Motor neuron (in vitro differentiated cells): ENCODE measurements at regions of chr17 and their contacts with region 1.

Region 1: GRCh38 chr17:82351716-82352488 is 7.1 kb upstream of the TEX19 start:
- ATAC-seq: peak; percentile 75 to 97 (median 84)
- H3K4me3 ChIP-seq: no peak overlapping the region
- H3K27ac ChIP-seq: no peak overlapping the region
- H3K4me1 ChIP-seq: peaks cover 12 to 13% of the 10 kb centered on the region in 2 donors

Region 2: GRCh38 chr17:82400830-82401229 is 48.9 kb after region 1 on chr17:
- in situ Hi-C with region 1: loop called in 1 of 9 experiments (anchors 10 kb)
- ATAC-seq: peak in 1 of 8 experiments; percentile 50
- H3K4me3 ChIP-seq: no peak overlapping the region
- H3K27ac ChIP-seq: no peak overlapping the region
- H3K4me1 ChIP-seq: peaks cover 7 to 8% of the 10 kb centered on the region in 2 donors

Region 3: DNA sequence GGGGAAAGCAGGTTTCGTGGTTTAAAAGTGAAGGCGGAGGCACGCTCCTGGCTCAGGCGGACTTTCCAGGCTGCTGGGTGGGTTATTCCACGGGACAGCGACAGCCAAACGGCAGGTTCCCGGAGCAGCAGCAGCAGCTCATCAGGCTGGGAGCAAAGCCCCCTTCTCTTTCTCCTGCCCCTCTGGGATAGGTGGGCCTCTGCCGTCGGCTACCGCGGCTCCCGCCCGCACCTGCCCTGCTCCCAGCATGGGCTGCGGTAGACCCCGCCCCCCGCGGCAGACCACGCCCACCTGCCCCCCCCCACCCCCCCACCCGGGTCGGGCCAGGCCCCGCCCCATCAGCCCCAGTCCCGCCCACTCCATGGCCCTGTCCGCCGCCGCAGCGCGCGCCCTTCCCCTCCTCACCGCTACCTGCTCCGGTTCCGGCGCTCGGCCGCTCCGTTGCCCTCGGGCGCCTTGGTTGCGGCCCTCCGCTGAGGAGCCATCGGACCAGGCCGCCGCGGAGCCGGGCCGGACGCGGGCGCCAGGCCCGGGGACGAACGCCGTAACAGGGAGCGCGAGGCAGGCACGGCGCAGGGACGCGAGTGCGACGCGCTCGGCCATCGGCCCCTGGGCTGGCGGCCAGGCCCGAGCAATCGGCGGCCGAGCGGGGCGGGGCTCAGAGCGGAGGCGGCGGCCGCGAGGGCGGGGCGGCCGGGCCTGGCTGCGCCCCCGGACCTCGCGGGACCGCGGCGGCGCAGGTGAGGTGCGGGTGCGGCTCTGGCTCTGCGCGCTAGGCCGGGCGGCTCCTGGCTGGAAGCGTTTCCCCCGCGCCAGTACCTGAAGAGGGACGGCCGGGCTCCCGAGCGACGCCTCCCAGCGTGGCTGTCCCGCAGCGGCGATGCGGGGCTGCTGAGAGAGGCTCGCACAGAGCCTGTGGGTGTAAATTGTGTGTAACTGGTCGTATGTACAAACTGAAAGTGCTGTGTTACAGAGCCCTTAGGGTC is 66.4 kb after region 1 on chr17 and contains the starts of genes HEXD and OGFOD3:
- in situ Hi-C with region 1: loop called in 1 of 9 experiments (anchors 10 kb)
- ATAC-seq: peak; percentile 85 to 93 (median 89)
- H3K4me3 ChIP-seq: peak within 1 kb of the TSS; percentile 81 to 100 (median 98)
- H3K27ac ChIP-seq: peak within 1 kb of the TSS; percentile 93 to 99
- H3K4me1 ChIP-seq: peaks cover 9 to 12% of the 10 kb centered on the region in 2 donors
- total RNA-seq, gene HEXD: 10.3 to 33.4 (median 15.3) TPM
- total RNA-seq, gene OGFOD3: 8.1 to 24.5 (median 20.2) TPM